Esophagus squamous epithelium (tissue), 5 donors: ENCODE measurements at regions of chr9 and their contacts with region 1.

Region 1: GRCh38 chr9:112844771-112845542 is 45.7 kb downstream of the SLC46A2 start:
- DNase-seq: no peak
- H3K4me3 ChIP-seq: no peak overlapping the region
- H3K27ac ChIP-seq: no peak overlapping the region
- H3K4me1 ChIP-seq: peaks cover 0 to 8% (median 0%) of the 10 kb centered on the region in 3 donors
- H3K27me3 ChIP-seq: no peaks in the 10 kb centered on the region
- CTCF ChIP-seq: peak; percentile 94 to 99 (median 96)
- POLR2A ChIP-seq: no peak

Region 2: DNA sequence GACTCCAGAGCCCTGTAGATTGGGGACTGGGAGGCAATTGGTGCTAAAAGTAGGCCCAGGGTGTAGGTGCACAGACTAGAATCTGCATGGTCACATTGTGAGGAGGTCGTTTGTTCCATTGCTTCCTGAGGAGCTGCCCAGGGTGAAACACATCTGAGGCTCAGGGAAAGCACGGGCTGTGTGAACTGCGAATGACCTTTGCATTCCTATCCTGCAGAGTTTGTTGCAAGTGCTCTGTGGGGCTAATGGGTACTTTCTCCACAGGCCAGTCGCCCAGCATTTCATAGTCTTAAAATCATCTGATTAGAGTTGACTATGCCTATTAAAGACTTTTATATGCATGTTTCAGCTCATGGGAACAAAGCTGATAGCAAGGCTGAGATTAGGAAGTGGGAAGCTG is 60.1 kb after region 1 on chr9:
- intact Hi-C with region 1: loop called (anchors 10 kb)
- DNase-seq: no peak
- H3K4me3 ChIP-seq: no peak overlapping the region
- H3K27ac ChIP-seq: no peak overlapping the region
- H3K4me1 ChIP-seq: no peaks in the 10 kb centered on the region
- H3K27me3 ChIP-seq: no peaks in the 10 kb centered on the region
- CTCF ChIP-seq: no peak
- POLR2A ChIP-seq: no peak